OCI-LY7 (cell line): ENCODE measurements at regions of chr3 and their contacts with region 1.

Region 1: GRCh38 chr3:156126467-156126866 is 6.1 kb downstream of the KCNAB1 start:
- DNase-seq: no peak
- H3K4me3 ChIP-seq: no peak overlapping the region
- H3K27ac ChIP-seq: no peak overlapping the region
- H3K4me1 ChIP-seq: no peaks in the 10 kb centered on the region
- CTCF ChIP-seq: no peak

Region 2: DNA sequence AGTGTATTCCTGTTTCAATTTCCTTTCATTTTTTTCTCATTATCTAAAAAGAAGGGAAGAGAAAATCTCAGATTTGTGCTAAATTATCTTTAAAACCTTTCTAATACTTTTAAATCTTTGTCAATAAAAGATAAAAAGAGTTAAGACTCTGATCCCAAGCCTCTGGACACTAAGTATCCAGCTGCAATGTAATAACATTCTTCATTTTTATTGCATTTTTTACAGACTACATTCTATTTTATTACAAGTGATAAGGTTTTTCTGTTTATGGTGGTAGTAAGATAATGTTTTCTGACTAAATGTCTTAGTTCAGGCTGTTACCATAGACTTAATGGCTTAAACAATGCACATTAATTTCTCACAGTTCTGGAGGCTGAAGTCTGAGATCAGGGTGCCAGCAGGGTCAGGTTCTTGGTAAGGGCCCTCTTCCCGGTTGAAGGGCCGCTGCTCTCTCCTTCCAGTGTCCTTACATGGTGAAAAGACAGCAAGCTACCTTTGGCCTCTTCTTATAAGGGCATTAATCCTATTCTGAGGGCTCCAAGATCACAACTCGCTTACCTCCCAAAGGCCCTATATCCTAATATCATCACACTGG is 13.6 kb after region 1 on chr3:
- CTCF ChIA-PET with region 1: no interaction called
- POLR2A ChIA-PET with region 1: interaction called, 14 read pairs
- intact Hi-C with region 1: no loop called
- DNase-seq: no peak
- H3K4me3 ChIP-seq: no peak overlapping the region
- H3K27ac ChIP-seq: no peak overlapping the region
- H3K4me1 ChIP-seq: no peaks in the 10 kb centered on the region
- CTCF ChIP-seq: no peak